Activated CD8-positive, alpha-beta T cell treated with anti-CD3 and anti-CD28 coated beads, Interleukin-2, amount 10 ng/mL, durations not matched to agents 7 days and 5 days (primary cell): ENCODE measurements at regions of chr1 and their contacts with region 1.

Region 1: DNA sequence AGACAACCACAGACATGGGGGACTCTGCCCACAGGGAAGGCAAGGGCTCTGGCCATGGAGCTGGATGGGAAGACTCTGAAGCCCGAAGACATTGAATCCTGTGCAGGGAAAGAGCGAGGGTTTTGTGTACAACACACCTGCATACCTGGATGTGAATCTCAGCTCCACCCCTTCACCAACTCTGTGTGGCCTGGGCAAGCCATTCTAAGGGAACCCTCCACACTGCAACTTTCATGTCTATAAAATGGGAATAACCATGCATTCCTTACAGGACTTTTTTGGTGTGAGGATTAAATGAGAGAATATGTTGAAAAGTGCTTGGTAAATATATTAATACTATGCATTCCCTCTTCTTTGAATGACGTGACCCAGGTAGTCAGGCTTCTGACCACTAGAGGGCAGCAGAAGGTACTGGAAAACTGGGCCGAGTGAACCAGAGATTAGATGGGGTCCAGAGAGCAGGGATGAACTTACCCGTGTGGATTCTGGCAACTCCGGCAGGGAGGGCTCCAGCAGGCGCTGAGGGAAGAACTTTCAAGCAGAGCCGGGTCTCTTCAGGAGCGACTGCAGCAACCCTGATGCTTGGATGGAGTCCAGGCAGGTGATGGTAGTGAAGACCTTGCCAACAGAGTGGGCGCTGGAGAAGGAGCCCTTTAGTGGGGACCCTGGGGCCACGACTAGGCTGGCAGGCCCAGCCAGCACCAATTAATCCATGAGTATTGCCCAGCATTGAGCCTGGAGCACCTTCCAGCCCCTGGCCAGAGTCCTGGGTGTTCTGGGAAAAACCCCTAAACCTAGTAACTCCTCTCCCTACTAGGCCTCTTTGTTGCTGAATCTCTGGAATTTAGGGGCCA is 834 bp upstream of the ELF3 start:
- DNase-seq: peak; percentile 73
- ATAC-seq: peak; percentile 80
- H3K4me3 Mint-ChIP-seq: no peak overlapping the region
- H3K27ac Mint-ChIP-seq: no peak overlapping the region
- H3K4me1 Mint-ChIP-seq: no peaks in the 10 kb centered on the region
- H3K27me3 Mint-ChIP-seq: no peaks in the 10 kb centered on the region

Region 2: GRCh38 chr1:202046227-202046801 is 36.8 kb after region 1 on chr1:
- CTCF ChIA-PET with region 1: no interaction called
- POLR2A ChIA-PET with region 1: no interaction called
- DNase-seq: no peak
- ATAC-seq: no peak
- H3K4me3 Mint-ChIP-seq: no peak overlapping the region
- H3K27ac Mint-ChIP-seq: no peak overlapping the region
- H3K4me1 Mint-ChIP-seq: peaks cover 5% of the 10 kb centered on the region
- H3K27me3 Mint-ChIP-seq: peaks cover 2% of the 10 kb centered on the region

Region 3: DNA sequence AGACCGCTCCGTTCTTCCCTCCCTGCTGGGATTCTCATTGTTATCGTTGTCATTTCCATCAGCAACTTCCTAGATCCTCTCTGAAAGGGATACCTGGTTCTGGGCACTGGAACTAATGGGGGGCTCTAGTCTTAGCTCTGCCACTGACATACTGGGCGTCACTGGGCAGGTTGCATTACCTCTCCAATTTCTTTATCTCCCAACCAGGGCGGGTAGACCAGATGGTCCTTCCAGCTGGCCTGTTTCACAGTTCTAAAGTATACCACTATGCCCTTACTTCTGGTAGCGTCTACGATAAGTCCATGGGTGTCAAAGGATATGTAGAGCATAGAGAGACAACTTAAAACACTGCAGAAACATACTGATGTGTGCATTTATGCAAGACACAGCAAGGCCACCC is 114.6 kb after region 1 on chr1:
- CTCF ChIA-PET with region 1: no interaction called
- POLR2A ChIA-PET with region 1: no interaction called
- DNase-seq: no peak
- ATAC-seq: no peak
- H3K4me3 Mint-ChIP-seq: no peak overlapping the region
- H3K27ac Mint-ChIP-seq: no peak overlapping the region
- H3K4me1 Mint-ChIP-seq: no peaks in the 10 kb centered on the region
- H3K27me3 Mint-ChIP-seq: peaks cover 9% of the 10 kb centered on the region

Region 4: DNA sequence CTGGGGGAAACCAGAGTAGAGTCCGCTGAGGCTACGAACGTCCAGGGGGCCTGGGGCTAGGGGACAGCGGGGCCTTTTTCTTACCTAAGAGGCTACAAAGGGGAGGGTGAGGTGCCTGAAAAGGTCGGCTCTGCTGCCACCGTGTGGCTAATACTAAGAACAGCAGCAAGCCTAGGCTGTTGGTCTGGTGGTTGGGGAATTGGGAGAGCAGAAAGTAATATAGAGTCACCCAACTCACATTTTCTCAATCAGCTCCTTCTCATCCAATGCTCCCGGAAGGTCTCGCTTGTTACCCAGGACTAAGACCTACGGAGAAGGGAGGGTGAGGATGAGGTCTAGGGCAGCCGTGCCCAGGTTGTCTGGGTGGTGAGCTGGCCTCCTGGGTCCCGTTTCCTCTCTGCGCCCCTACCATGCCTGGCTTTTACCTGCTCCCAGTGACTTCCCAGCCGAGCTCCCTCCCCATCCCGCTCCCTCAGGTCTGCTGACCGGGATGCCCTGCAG is 125.7 kb after region 1 on chr1:
- CTCF ChIA-PET with region 1: interaction called, 16 read pairs
- POLR2A ChIA-PET with region 1: no interaction called
- DNase-seq: peak; percentile 67
- ATAC-seq: peak; percentile 77
- H3K4me3 Mint-ChIP-seq: no peak overlapping the region
- H3K27ac Mint-ChIP-seq: no peak overlapping the region
- H3K4me1 Mint-ChIP-seq: peaks cover 12% of the 10 kb centered on the region
- H3K27me3 Mint-ChIP-seq: no peaks in the 10 kb centered on the region